Activated naive CD8-positive, alpha-beta T cell treated with anti-CD3 and anti-CD28 coated beads, Interleukin-2, amount 10 ng/mL, durations not matched to agents 7 days and 5 days (primary cell): ENCODE measurements at regions of chr5 and their contacts with region 1.

Region 1: DNA sequence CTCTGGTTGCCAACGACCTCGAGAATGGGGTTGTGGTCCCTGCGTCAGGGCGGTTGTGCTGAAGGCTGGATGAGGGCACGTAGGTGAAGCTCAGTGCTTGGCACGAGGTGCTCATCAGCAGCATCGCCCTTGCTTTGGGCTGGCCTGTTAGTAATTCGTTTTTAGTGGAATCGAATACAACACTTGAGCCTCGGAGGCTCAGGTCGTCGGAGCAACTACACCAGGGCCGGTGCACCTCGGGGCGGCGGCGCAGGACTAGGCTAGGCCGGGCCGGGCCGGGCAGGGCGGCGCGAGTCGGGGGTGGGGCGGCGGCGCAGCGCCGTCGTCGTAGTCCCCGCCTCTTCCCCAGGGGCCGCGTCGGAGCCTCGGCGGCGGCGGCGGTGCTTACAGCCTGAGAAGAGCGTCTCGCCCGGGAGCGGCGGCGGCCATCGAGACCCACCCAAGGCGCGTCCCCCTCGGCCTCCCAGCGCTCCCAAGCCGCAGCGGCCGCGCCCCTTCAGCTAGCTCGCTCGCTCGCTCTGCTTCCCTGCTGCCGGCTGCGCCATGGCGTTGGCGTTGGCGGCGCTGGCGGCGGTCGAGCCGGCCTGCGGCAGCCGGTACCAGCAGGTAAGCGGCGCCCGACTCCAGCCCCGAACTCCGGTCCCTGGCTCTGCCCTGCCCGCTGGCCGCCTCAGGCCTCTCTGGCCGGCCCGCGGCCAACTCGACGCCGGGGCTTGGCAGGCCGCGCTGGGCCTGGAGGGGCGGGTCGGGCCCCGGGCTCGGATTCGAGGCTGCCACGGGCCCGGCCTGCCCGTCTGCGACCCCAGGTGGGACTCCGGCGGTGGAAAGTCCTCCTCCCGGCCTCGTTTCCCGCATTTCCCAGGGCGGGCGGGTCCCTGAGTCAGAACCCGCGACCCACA is at the start of gene NDFIP1:
- DNase-seq: peak; percentile 93
- ATAC-seq: peak; percentile 88
- H3K4me3 Mint-ChIP-seq: peak within 1 kb of the TSS; percentile 95
- H3K27ac Mint-ChIP-seq: peak within 1 kb of the TSS; percentile 97
- H3K4me1 Mint-ChIP-seq: peaks cover 55% of the 10 kb centered on the region
- H3K27me3 Mint-ChIP-seq: no peaks in the 10 kb centered on the region
- total RNA-seq, gene NDFIP1: 59.2 to 62.3 TPM

Region 2: GRCh38 chr5:142006363-142007236 is 102.1 kb before region 1 on chr5:
- POLR2A ChIA-PET with region 1: interaction called, 63 read pairs
- DNase-seq: no peak
- ATAC-seq: peak; percentile 91
- H3K4me3 Mint-ChIP-seq: peak overlapping the region; percentile 78
- H3K27ac Mint-ChIP-seq: peak overlapping the region; percentile 96
- H3K4me1 Mint-ChIP-seq: peaks cover 62% of the 10 kb centered on the region
- H3K27me3 Mint-ChIP-seq: no peaks in the 10 kb centered on the region

Region 3: GRCh38 chr5:142063878-142064331 is 44.8 kb before region 1 on chr5:
- POLR2A ChIA-PET with region 1: interaction called, 11 read pairs
- DNase-seq: peak; percentile 58
- ATAC-seq: peak; percentile 93
- H3K4me3 Mint-ChIP-seq: peak overlapping the region; percentile 61
- H3K27ac Mint-ChIP-seq: peak overlapping the region; percentile 54
- H3K4me1 Mint-ChIP-seq: peaks cover 12% of the 10 kb centered on the region
- H3K27me3 Mint-ChIP-seq: no peaks in the 10 kb centered on the region

Region 4: DNA sequence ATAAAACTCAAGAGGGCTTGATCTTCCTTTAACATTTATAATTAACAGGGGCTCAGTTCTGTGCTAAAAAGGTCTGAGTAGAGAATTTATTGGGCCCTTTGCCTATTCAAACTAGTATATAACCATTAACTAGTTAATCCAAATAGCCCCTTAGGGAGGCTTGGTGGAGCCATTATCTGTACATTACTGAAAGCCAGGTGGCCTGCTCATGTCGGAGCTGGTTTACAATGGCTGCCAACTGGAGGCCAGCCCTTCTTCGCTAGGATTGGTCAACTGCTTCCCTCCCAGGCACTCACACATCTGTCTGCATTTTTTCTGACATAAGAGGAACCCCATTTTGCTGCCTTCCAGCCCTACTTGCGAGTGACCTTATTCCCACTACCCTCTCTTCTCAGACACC is 30.5 kb before region 1 on chr5:
- POLR2A ChIA-PET with region 1: no interaction called
- DNase-seq: no peak
- ATAC-seq: no peak
- H3K4me3 Mint-ChIP-seq: no peak overlapping the region
- H3K27ac Mint-ChIP-seq: no peak overlapping the region
- H3K4me1 Mint-ChIP-seq: peaks cover 5% of the 10 kb centered on the region
- H3K27me3 Mint-ChIP-seq: no peaks in the 10 kb centered on the region

Region 5: GRCh38 chr5:142120247-142120935 is 11.7 kb after region 1 on chr5:
- POLR2A ChIA-PET with region 1: interaction called, 12 read pairs
- DNase-seq: no peak
- ATAC-seq: peak; percentile 58
- H3K4me3 Mint-ChIP-seq: peak overlapping the region; percentile 72
- H3K27ac Mint-ChIP-seq: peak overlapping the region; percentile 70
- H3K4me1 Mint-ChIP-seq: peaks cover 46% of the 10 kb centered on the region
- H3K27me3 Mint-ChIP-seq: no peaks in the 10 kb centered on the region

Region 6: DNA sequence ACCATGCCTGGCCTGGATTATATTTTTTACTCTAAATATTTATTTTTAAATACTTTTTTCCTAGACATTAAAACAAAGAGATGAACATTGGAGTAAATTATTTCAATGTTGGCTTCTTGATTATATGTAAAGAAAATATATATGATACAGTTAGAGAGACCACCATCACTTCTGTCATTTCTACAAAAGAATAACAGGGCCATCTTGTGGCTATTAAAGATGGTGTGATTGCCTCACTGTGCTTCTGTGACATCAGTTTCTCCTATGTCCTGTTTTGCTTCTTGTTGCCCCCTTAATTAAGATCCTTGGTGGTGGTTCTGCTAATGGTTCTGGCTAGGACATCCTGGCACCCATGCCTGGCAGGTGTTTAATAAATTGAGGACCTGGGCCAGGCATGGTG is 32.8 kb after region 1 on chr5:
- POLR2A ChIA-PET with region 1: no interaction called
- DNase-seq: no peak
- ATAC-seq: no peak
- H3K4me3 Mint-ChIP-seq: no peak overlapping the region
- H3K27ac Mint-ChIP-seq: no peak overlapping the region
- H3K4me1 Mint-ChIP-seq: no peaks in the 10 kb centered on the region
- H3K27me3 Mint-ChIP-seq: no peaks in the 10 kb centered on the region

Region 7: GRCh38 chr5:142253938-142254337 is 145.3 kb after region 1 on chr5:
- POLR2A ChIA-PET with region 1: no interaction called
- DNase-seq: no peak
- ATAC-seq: no peak
- H3K4me3 Mint-ChIP-seq: no peak overlapping the region
- H3K27ac Mint-ChIP-seq: no peak overlapping the region
- H3K4me1 Mint-ChIP-seq: no peaks in the 10 kb centered on the region
- H3K27me3 Mint-ChIP-seq: peaks cover 3% of the 10 kb centered on the region

Region 8: GRCh38 chr5:142280066-142280911 is 171.6 kb after region 1 on chr5:
- POLR2A ChIA-PET with region 1: no interaction called
- DNase-seq: no peak
- ATAC-seq: no peak
- H3K4me3 Mint-ChIP-seq: no peak overlapping the region
- H3K27ac Mint-ChIP-seq: no peak overlapping the region
- H3K4me1 Mint-ChIP-seq: no peaks in the 10 kb centered on the region
- H3K27me3 Mint-ChIP-seq: peaks cover 3% of the 10 kb centered on the region